ENCODE measurements at regions of chr15 and their contacts with region 1.

Region 1: DNA sequence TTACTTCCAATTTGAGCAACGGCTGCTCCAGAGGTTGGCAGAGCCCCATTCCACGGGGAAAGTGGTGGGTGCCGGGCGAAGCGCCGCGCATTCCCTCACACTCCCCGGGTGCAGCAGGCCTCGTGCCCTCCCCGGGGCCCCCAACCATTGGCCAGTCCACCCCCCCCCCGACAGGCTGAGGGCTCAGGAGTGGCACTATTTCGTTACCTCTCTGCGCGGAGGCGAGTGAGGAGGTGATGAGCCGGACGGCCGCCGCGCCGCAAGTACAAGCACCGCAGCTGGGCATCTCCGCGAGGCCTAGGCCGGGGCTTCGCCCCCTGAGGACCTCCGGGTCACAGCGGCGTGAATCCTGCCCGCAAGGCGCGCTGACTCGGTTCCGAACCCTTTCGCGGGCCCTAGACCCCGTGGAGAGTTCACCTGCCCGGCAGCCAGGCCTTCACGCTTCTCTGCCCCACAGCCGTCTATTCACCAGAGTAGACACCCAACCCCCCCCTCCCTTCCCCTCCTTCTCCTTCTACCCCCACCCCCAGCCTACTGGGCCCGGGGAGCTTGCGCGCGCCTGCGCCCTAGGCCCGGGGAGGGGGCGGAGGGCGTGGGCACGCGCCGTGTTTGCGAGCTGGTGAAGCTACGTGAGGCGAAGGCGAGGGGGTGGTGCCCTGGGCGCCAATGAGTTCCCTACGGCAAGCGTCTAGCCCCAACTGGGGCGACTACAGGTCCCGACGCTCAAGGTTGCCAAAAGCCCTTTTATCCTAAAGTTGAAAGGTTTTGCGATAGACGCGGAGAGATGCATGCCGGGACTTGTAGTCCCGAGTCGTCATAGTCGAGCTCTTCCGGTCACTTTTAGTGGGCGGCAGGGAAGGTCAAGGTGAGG is at the start of gene CLPX:
- DNase-seq: peak; percentile 92 to 95
- ATAC-seq: peak; percentile 82 to 88
- H3K4me3 ChIP-seq: peak within 1 kb of the TSS; percentile 91 to 99 (median 96)
- H3K27ac ChIP-seq: peak within 1 kb of the TSS; percentile 97 to 99 (median 98)
- H3K4me1 ChIP-seq: peaks cover 19 to 35% of the 10 kb centered on the region in 2 donors
- H3K27me3 ChIP-seq: no peaks in the 10 kb centered on the region
- CTCF ChIP-seq: no peak
- POLR2A ChIP-seq: peak; percentile 84 to 91
- total RNA-seq, gene CLPX: 49.3 to 116 (median 63.3) TPM

Region 2: GRCh38 chr15:64842986-64843561 is 342.0 kb before region 1 on chr15:
- in situ Hi-C with region 1: no loop called
- intact Hi-C with region 1: no loop called
- DNase-seq: peak; percentile 46 to 64
- ATAC-seq: peak in 1 of 2 donors; percentile 20
- H3K4me3 ChIP-seq: peak overlapping the region; percentile 66 to 92 (median 80)
- H3K27ac ChIP-seq: peak overlapping the region; percentile 84 to 95 (median 89)
- H3K4me1 ChIP-seq: peaks cover 8 to 25% of the 10 kb centered on the region in 2 donors
- H3K27me3 ChIP-seq: no peaks in the 10 kb centered on the region
- CTCF ChIP-seq: no peak
- POLR2A ChIP-seq: peak; percentile 29 to 35

Region 3: GRCh38 chr15:65133548-65134200 is 51.4 kb before region 1 on chr15 and contains the start of gene PDCD7:
- in situ Hi-C with region 1: no loop called
- intact Hi-C with region 1: loop called (anchors 2 kb)
- DNase-seq: peak; percentile 75 to 81
- ATAC-seq: peak; percentile 97 to 99
- H3K4me3 ChIP-seq: peak within 1 kb of the TSS; percentile 69 to 93 (median 78)
- H3K27ac ChIP-seq: peak within 1 kb of the TSS; percentile 71 to 89 (median 88)
- H3K4me1 ChIP-seq: peaks cover 18 to 30% of the 10 kb centered on the region in 2 donors
- H3K27me3 ChIP-seq: no peaks in the 10 kb centered on the region
- CTCF ChIP-seq: no peak
- POLR2A ChIP-seq: peak; percentile 69 to 72
- total RNA-seq, gene PDCD7: 10.4 to 15.7 (median 12.4) TPM

Region 4: DNA sequence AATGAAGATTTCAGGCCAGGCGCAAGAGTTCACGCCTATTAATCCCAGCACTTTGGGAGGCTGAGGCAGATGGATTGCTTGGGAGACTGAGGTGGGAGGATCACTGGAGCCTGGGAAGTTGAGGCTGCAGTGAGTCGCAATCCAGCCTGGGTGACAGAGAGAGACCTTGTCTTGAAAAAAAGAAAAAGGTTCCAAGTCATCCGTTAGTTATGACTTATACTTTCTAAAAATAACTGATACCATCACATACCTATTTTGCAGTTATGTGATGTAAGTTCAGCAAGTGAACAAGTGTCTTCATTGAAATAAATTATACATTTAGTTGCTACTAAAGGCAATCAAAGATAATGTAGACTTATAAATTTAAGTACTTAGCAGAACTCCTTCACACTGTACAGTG is 22.1 kb before region 1 on chr15:
- in situ Hi-C with region 1: no loop called
- intact Hi-C with region 1: loop called (anchors 2 kb)
- DNase-seq: peak in 1 of 2 donors; percentile 42
- ATAC-seq: peak; percentile 98 to 99
- H3K4me3 ChIP-seq: no peak overlapping the region
- H3K27ac ChIP-seq: peak overlapping the region; percentile 45 to 66 (median 58)
- H3K4me1 ChIP-seq: peaks cover 23 to 26% of the 10 kb centered on the region in 2 donors
- H3K27me3 ChIP-seq: no peaks in the 10 kb centered on the region
- CTCF ChIP-seq: no peak
- POLR2A ChIP-seq: no peak

Region 5: GRCh38 chr15:65275728-65276126 is 90.6 kb after region 1 on chr15:
- in situ Hi-C with region 1: loop called in 2 of 4 experiments (anchors 5 to 10 kb)
- intact Hi-C with region 1: loop called (anchors 1 kb)
- DNase-seq: no peak
- ATAC-seq: no peak
- H3K4me3 ChIP-seq: no peak overlapping the region
- H3K27ac ChIP-seq: no peak overlapping the region
- H3K4me1 ChIP-seq: peaks cover 2 to 5% of the 10 kb centered on the region in 2 donors
- H3K27me3 ChIP-seq: no peaks in the 10 kb centered on the region
- CTCF ChIP-seq: no peak
- POLR2A ChIP-seq: no peak

Region 6: DNA sequence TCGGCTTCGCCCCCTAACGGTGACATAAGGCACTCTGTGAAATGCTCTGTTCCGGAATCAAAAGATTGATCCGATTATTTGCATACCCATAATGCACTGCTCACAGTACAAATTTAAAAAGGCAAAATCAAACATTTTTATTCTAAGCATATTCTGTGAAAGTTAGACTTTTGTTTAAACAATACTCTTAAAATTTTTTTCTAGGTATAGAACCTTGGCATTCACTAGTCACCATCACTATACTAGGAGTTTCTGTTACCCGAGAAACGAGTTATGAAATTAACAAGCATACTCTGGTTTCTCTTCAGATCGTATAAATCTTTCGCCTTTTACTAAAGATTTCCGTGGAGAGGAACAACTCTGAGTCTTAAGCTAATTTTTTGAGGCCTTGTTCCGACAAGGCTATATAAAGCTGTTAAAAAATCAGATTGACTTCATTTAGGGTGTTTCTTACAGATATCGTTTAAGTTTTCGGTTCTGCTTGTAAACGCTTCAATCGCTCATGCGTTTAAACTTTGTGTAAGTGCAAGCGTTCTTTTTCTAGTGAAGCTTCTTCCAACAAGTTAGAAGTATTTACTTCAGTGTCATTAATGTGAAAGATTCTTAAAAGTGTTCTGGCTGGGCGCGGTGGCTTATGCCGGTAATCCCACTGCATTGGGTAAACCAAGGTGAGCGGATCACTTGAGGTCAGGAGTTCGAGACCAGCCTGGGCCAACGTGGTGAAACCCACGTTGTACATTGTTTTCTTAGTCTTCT is 119.5 kb after region 1 on chr15 and contains the start of gene RNU5B-1:
- in situ Hi-C with region 1: no loop called
- intact Hi-C with region 1: loop called (anchors 2 kb)
- DNase-seq: peak; percentile 61 to 72
- ATAC-seq: peak; percentile 90 to 91
- H3K4me3 ChIP-seq: peak within 1 kb of the TSS; percentile 64 to 70 (median 67)
- H3K27ac ChIP-seq: peak within 1 kb of the TSS; percentile 87 to 95 (median 91)
- H3K4me1 ChIP-seq: peaks cover 7 to 8% of the 10 kb centered on the region in 2 donors
- H3K27me3 ChIP-seq: no peaks in the 10 kb centered on the region
- CTCF ChIP-seq: peak; percentile 75 to 90 (median 85)
- POLR2A ChIP-seq: peak; percentile 97 to 99
- total RNA-seq, gene RNU5B-1: not detected

Measured in gastrocnemius medialis (tissue), 4 donors.